Activated naive CD4-positive, alpha-beta T cell treated with anti-CD3 and anti-CD28 coated beads, Interleukin-2, amount 10 ng/mL, durations not matched to agents 7 days and 5 days (primary cell): ENCODE measurements at regions of chr22 and their contacts with region 1.

Region 1: DNA sequence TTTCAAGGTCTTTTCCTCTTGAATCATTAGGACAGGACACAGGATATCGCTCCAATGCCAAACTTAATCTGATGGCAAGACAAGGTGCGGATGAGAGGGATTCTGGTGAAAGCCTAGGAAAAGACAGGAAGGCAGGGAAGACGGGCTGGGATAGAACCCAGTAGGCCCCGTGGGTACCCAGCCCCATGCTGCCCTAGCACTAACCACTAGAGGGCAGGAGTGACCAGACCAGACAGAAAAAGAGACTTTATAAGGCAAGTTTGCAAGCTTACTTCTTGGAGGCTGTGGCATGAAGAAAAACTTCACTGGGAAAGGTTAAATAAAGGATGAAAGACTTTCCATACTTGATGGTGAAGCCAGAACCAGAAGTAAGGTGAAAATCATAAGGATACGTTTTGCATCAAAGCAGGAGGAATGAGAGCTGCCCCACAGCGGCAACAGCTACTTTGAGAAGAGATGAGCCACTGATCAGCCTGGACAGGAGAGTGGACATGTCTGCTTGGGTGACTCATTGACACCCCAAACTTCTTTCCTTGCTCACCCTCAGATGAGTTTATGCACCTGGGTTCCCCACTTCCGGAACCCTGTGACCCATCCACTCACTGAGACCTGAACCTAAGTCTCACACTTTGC is 39.8 kb downstream of the SYN3 start:
- DNase-seq: peak; percentile 45
- H3K4me3 Mint-ChIP-seq: no peak overlapping the region
- H3K27ac Mint-ChIP-seq: no peak overlapping the region
- H3K4me1 Mint-ChIP-seq: no peaks in the 10 kb centered on the region
- H3K27me3 Mint-ChIP-seq: no peaks in the 10 kb centered on the region

Region 2: DNA sequence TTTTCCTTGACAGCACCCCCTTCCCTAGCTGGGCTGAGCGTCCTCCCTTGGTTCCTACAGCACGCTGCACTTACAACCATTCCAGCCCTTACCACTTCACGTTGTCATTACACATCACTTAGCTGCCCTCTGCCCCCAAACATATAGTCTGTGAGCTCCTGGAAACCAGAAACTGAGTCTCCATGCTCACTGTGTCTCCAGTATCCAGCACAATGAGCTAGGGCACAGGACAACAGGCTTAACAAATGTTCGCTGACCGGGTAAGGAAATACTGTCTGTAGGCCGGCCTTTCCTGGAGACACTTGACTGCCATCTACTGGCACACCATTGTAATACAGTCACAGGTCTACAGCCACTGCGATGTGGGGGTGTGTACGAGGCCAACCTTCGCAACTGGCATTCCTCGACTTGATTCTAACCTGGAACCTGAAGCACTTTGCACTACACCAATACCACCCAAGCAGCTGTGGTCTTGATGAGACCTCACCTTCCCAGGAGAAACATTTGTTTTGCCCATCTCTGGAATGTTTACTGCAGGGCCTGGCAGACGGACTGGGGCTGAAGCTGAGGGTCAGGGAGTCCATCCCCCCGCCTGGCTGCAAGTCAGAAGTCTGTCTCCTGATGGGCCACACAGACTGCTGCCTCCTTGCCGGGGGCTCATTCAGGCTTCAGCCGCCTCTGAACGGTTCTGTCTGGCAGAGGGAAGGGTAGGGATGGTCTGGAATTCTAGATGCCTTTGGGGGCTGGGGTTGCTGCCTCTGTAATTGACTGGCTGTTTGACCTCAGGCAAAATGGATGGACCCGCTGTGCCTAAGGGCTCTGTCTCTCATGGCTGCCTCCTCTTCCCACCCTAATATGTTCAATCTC is 32.2 kb before region 1 on chr22:
- CTCF ChIA-PET with region 1: no interaction called
- DNase-seq: peak; percentile 61
- H3K4me3 Mint-ChIP-seq: no peak overlapping the region
- H3K27ac Mint-ChIP-seq: no peak overlapping the region
- H3K4me1 Mint-ChIP-seq: no peaks in the 10 kb centered on the region
- H3K27me3 Mint-ChIP-seq: no peaks in the 10 kb centered on the region

Region 3: GRCh38 chr22:33049119-33049729 is 30.9 kb after region 1 on chr22:
- CTCF ChIA-PET with region 1: interaction called, 22 read pairs
- DNase-seq: peak; percentile 71
- H3K4me3 Mint-ChIP-seq: no peak overlapping the region
- H3K27ac Mint-ChIP-seq: no peak overlapping the region
- H3K4me1 Mint-ChIP-seq: no peaks in the 10 kb centered on the region
- H3K27me3 Mint-ChIP-seq: peaks cover 24% of the 10 kb centered on the region

Region 4: GRCh38 chr22:33209930-33210784 is 191.8 kb after region 1 on chr22:
- CTCF ChIA-PET with region 1: interaction called, 13 read pairs
- DNase-seq: peak; percentile 25
- H3K4me3 Mint-ChIP-seq: no peak overlapping the region
- H3K27ac Mint-ChIP-seq: no peak overlapping the region
- H3K4me1 Mint-ChIP-seq: no peaks in the 10 kb centered on the region
- H3K27me3 Mint-ChIP-seq: no peaks in the 10 kb centered on the region